Left ventricle myocardium superior (tissue), 1 donor: ENCODE measurements at regions of chr20 and their contacts with region 1.

Region 1: DNA sequence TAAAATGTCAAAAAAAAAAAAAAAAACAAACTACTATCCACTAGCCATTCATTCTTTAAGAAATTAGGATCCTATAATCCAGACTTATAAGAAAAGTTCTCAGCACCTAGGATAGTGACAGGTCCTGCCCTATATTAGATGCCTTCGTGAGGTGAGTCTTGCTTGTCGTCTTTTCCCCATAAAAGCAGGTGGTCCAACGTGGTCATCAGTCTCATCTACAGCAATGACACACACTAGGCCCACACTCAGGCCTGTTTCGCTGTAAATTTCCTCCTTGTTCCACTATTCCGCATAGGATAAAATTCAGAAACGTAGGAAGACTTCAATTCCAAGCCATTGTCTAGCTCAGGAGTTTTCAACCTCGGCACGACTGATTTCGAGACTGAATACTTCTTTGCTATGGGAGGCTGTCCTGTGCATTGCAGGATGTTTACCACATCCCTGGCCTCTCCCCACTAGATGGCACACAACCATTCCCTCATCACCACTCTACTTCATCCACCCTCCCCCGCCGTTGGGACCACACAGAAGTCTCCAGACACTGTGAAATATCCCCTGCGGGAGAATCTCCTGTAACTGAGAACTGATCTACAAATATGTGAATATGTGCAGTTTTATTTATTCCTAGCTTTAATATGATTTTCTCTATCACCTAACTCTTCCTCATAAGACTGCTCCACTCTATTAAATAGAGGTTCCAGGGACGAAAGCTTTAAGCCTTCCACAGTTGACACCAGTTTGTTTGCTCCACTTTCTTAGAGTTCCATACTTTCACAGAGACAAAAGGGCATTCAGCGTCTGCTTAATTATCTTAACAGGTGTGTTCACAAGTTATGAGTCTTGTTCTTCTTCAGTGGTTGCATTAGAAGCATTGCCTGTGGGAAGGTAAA is 346.3 kb downstream of the BMP2 start:
- DNase-seq: peak; percentile 57
- ATAC-seq: peak; percentile 98

Region 2: GRCh38 chr20:6882561-6883280 is 231.1 kb before region 1 on chr20:
- intact Hi-C with region 1: no loop called
- DNase-seq: no peak
- ATAC-seq: no peak

Region 3: GRCh38 chr20:6925744-6926278 is 188.0 kb before region 1 on chr20:
- intact Hi-C with region 1: no loop called
- DNase-seq: no peak
- ATAC-seq: no peak

Region 4: GRCh38 chr20:7161690-7162089 is 47.9 kb after region 1 on chr20:
- intact Hi-C with region 1: loop called (anchors 5 kb)
- DNase-seq: no peak
- ATAC-seq: no peak

Region 5: DNA sequence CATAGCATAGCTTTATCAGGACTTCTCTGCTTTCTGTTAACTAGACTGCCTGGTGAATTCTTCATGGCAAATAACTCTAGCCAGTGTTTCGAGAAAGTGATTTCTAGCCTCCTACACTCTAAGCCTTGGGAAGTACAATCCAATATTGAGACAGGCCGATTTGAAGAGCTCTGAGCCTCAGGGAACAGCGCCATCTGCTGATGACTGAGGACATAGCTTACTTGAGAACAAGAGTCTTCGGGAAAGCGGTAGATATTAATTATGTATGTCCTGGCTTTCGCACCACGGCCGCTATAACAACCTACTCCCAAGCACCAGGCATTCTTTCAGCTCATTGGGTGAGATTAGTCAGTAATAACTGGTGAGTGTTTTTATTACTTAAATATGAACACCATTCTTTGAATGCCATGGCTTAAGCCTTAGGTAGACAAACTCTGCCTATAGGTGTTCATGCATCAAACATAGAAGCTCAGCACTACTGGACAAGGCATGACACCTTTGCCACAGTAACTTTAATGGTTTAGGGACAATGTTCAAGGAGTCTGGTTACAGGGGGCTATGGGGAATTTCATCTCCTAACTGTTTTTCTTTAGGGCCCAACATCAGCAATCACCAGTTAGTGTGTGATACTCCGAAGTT is 172.2 kb after region 1 on chr20:
- intact Hi-C with region 1: loop called (anchors 5 kb)
- DNase-seq: peak; percentile 70
- ATAC-seq: peak; percentile 86

Region 6: DNA sequence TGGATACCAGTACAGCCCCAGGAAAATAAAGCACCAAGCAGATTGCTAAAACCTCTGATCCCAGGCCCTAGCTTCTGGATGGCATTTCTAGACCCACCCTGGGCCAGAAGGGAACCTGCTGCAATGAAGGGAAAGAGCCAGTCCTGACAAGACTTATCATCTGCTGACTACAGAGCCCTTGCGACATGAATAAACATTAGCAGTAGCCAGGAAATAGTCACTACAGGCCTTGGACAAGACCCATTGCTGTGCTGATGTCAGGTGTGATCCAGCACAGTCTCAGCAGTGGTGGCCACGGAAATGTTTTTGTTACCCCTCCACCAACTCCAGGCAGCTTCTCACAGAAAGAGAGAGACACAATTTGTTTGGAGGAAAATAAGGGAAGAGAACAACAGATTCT is 427.1 kb after region 1 on chr20:
- intact Hi-C with region 1: no loop called
- DNase-seq: no peak
- ATAC-seq: no peak